Natural killer cell (primary cell): ENCODE measurements at regions of chr19 and their contacts with region 1.

Region 1: DNA sequence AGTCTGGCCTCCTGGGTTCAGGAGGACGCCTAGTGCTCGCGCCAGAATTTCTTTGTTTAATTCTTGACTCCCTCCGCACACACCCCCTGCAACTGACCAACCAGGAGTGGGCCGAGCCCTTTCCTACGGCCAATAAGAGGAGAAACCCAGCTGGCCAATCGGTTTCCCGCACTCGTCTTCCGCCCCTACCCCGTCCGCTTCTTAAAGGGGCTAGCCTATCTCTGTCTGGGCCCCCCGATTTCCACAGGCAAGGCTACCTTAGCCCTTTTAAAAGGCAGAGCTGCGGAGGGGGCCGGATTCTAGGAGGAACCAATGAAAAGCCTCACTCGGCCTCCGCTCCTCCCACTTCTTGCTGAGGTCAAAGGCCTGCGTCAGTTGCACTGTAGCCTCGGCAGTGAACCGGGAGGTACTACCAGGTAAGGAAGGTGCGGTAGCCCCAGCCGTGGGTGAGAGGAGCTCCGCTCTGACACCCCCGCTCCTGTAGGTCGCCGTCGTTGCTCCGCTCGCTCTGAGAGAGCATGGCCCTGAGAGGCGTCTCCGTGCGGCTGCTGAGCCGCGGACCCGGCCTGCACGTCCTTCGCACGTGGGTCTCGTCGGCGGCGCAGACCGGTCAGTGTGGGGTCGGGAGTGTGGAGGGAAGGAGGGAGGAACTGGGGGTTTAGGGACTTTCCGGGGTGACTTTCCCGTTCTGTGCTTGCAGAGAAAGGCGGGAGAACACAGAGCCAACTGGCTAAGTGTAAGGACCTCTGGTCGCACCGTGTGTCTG is at the start of gene GCDH:
- DNase-seq: peak; percentile 91 to 98
- ATAC-seq: peak; percentile 91 to 98 (median 93)
- H3K4me3 ChIP-seq: peak within 1 kb of the TSS; percentile 87
- H3K4me3 Mint-ChIP-seq: peak within 1 kb of the TSS; percentile 96
- H3K27ac ChIP-seq: peak within 1 kb of the TSS; percentile 72
- H3K27ac Mint-ChIP-seq: peak within 1 kb of the TSS; percentile 90 to 93
- H3K4me1 ChIP-seq: peaks cover 21% of the 10 kb centered on the region
- H3K4me1 Mint-ChIP-seq: peaks cover 9 to 27% of the 10 kb centered on the region in 2 donors
- H3K27me3 ChIP-seq: no peaks in the 10 kb centered on the region
- H3K27me3 Mint-ChIP-seq: no peaks in the 10 kb centered on the region
- CTCF ChIP-seq: no peak
- total RNA-seq, gene GCDH: 35.9 to 41.7 (median 36.3) TPM

Region 2: GRCh38 chr19:12918271-12918670 is 27.3 kb after region 1 on chr19:
- intact Hi-C with region 1: loop called (anchors 2 kb)
- DNase-seq: no peak
- ATAC-seq: no peak
- H3K4me3 ChIP-seq: no peak overlapping the region
- H3K4me3 Mint-ChIP-seq: peak overlapping the region; percentile 85
- H3K27ac ChIP-seq: no peak overlapping the region
- H3K27ac Mint-ChIP-seq: peak overlapping the region; percentile 84 to 89
- H3K4me1 ChIP-seq: peaks cover 31% of the 10 kb centered on the region
- H3K4me1 Mint-ChIP-seq: peaks cover 17 to 26% of the 10 kb centered on the region in 2 donors
- H3K27me3 ChIP-seq: no peaks in the 10 kb centered on the region
- H3K27me3 Mint-ChIP-seq: no peaks in the 10 kb centered on the region
- CTCF ChIP-seq: no peak